GM10248 (cell line): ENCODE measurements at regions of chr12 and their contacts with region 1.

Region 1: DNA sequence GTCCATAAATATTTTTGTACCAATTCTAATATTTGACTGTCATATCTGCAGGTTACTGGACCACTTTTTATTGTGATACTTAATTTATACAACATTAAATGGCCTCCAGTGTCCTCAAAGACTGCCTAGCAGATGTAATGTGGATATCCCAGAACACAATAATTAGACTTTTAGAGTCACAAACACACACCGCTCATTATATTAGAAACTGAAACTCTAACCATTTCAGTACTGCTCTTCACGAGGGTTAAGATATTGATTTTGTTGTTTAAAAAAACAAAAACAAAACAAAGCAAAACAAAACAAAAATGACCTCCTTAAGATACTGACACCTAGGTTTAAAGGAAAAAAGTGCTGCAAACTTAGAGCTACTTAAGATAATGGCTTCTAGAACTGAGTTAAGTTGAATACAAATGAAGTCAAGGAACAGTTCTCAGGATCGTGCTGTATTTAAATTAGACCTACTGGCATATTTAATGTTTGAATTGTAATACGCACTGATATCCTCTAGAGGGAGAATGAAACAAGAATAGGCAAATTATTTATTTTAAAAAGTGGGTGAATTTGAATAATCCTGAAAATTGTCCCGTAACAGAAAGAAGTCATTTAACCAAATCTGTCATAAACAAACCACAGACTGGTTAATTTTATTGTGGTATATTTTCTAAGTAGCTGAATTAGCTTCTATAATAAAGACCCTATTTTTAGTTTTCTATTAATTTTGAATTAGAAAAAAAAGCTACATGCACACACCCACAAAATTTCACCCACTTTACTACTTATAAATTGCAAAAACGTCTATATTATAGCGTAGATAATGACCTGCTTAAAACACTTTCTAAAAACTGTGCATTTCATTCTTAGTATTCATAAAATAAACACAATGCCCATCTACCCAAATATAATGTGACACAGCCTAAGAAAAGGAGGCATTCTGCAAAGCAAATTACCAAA is 395.2 kb upstream of the DCN start:
- DNase-seq: peak; percentile 20
- CTCF ChIP-seq: peak; percentile 33

Region 2: GRCh38 chr12:91567100-91567485 is 10.8 kb before region 1 on chr12:
- CTCF ChIA-PET with region 1: interaction called, 24 read pairs
- POLR2A ChIA-PET with region 1: no interaction called
- DNase-seq: no peak
- CTCF ChIP-seq: no peak

Region 3: DNA sequence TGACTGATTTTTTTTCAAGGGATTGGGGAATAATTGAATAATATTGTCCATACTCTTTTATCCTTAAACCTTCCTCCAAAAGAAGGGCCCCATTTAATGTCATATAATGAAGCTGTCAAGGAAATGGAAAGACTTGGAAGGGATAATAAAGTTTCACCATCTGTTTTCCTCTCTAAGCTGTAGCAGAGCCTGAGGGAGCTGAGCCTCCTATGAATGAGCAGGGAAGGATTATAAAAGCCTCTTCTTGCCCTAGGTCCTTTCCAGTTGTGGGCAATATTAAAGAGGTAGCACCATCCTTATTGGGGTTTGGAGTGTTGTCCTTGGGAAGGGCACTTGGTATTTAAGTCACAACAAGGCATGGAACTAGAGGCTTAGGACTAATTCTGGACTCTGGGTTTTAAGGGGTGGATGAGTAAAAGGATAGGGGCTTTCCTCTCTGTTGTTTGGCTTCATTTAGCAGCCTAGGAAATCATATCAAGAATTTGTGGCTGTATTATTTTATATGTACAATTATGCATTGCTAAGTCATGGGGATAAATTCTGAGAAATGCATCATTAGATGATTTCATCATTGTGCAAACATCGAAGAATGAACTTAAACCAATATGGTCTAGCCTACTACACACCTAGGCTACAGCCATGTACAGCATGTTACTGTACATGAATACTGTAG is 13.2 kb after region 1 on chr12:
- CTCF ChIA-PET with region 1: interaction called, 12 read pairs
- POLR2A ChIA-PET with region 1: no interaction called
- DNase-seq: no peak
- CTCF ChIP-seq: no peak

Region 4: GRCh38 chr12:92702754-92703679 is 1125.2 kb after region 1 on chr12 and contains the start of gene PLEKHG7:
- CTCF ChIA-PET with region 1: no interaction called
- POLR2A ChIA-PET with region 1: interaction called, 11 read pairs
- DNase-seq: peak; percentile 83
- CTCF ChIP-seq: no peak